ENCODE measurements at regions of chr18 and their contacts with region 1.

Region 1: DNA sequence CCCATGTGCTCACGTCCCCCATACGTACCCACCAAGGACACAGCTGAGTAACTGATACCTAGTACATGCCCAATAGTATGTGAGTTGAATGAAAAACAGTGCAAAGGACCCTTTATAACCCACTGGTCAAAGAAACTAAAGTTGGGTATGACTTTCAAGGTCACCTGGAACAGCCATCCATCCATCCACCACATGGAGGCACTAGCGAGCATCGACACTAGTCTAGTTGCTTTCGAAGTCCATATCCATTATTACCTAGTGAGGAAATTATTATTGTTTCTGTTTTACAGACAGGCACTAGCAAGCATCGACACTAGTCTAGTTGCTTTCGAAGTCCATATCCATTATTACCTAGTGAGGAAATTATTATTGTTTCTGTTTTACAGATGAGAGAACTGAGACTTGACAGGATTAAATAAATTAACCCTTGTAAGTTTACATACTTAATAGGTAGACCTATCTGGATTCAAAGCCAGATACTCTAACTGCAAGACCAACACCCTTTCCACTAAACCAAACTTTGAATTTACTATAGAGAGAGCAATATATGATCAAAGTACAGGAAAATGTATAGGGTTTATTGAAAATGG is 233.7 kb downstream of the METTL4 start:
- DNase-seq: peak in 25 of 42 donors; percentile 3 to 62 (median 25)

Region 2: GRCh38 chr18:2547477-2548087 is 209.9 kb after region 1 on chr18:
- intact Hi-C with region 1: loop called (anchors 10 kb)
- DNase-seq: peak in 1 of 42 donors; percentile 12